Heart left ventricle (tissue), 16 donors: ENCODE measurements at regions of chr2 and their contacts with region 1.

Region 1: DNA sequence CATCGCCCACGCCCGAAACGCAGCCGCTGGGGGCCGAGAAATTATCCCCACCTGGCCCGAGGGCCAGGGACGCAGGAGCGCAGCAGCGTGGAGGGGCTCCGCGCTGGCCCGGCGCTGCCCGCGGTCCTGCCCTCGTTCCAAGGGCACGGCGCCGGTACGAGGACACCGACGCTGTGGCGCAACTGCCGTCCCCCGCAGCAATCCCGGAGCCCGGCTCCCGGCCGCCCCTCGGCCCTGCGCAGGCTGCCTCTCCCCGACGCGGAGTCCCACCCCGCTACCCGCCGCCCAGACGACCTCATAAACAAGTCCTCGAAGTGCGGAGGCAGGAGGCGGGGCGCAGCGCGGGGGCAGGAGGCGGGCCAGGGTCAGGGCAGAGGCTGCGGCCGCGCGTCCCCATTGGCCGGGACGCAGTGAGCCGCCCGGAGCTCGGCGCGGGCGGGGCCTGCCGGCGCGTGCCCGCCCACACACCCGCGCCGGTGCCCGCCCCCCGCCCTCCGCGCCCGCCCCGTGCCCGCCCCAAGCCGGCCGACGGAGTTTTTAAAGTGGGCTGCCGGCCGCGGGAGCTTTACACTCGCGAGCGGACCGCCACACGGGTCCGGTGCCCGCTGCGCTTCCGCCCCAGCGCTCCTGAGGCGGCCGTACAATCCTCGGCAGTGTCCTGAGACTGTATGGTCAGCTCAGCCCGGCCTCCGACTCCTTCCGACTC is at the start of gene EPAS1:
- DNase-seq: peak; percentile 97 to 98 (median 98)
- ATAC-seq: peak; percentile 80 to 92 (median 85)
- H3K4me3 ChIP-seq: peak within 1 kb of the TSS; percentile 76 to 99 (median 92)
- H3K27ac ChIP-seq: peak within 1 kb of the TSS; percentile 92 to 100 (median 96)
- H3K4me1 ChIP-seq: peaks cover 0 to 42% (median 18%) of the 10 kb centered on the region in 12 donors
- H3K27me3 ChIP-seq: peaks cover 0 to 13% (median 0%) of the 10 kb centered on the region in 9 donors
- CTCF ChIP-seq: no peak
- POLR2A ChIP-seq: peak; percentile 61 to 98
- total RNA-seq, gene EPAS1: 194 to 790 (median 216) TPM

Region 2: DNA sequence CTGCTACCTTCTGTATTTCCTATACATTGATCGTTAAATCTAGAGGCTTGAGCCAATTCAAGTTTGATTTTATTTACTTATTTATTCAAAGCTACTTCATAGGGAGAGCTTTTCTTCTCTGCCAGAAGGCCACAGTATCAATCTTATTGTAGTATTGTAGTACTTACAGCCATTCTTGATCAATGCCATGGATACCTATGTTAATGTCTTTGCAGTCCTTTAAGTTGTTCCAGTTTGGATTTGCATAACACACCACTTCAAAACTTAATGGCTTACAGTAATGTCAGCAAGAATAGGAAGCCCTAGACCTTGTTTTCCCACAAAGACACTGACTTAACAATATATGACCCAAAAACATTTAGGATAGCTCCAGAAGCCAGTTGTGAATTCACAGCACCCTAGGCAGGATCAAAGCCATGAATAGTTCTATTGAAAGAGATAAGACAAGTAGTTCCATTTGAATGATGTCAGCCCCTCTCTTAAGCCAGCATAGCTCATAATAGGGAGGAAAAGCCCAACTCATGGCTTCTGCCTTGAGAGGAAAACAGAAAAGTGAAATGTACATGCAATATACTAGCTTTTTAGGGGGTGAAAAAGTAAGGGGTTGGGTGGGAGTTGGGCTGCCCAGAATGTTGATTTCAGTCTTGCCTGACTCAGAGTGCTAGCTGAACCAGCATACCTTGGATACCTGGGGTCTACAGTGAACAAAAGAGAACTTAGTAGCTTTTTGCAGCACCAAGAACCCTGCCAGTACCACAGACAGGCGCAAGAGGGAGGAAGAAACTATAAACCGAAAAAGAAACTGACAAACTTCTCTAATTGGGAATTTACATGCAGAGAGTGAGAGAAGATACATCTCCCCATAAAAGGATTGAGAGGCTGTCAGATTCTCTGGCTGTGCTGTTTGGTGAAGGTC is 1833.8 kb before region 1 on chr2:
- intact Hi-C with region 1: no loop called
- DNase-seq: no peak
- ATAC-seq: peak in 2 of 4 donors; percentile 46 to 60
- H3K4me3 ChIP-seq: no peak overlapping the region
- H3K27ac ChIP-seq: no peak overlapping the region
- H3K4me1 ChIP-seq: peaks cover 0 to 6% (median 0%) of the 10 kb centered on the region in 12 donors
- H3K27me3 ChIP-seq: no peaks in the 10 kb centered on the region
- CTCF ChIP-seq: no peak
- POLR2A ChIP-seq: no peak

Region 3: DNA sequence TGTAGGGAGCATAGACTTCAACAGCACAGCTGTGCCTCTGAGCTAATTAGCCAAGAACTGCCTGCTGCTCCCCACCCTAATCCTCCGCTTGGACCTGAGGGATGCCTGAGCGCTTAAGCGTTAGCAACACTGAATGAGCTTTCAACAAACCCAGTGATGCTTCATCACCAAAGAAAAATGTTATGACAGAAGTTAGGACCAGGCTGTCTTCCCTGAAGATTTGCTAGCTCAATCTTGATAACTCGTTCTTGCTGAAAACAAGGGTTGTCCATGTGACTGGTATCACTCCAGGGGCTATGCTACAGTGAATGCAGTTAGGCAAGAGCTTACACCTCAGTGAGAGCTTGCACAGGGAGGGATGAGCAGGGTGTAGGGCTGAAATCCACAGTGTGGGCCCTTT is 1097.0 kb before region 1 on chr2:
- intact Hi-C with region 1: no loop called
- DNase-seq: no peak
- ATAC-seq: peak in 3 of 4 donors; percentile 73 to 84 (median 78)
- H3K4me3 ChIP-seq: no peak overlapping the region
- H3K27ac ChIP-seq: no peak overlapping the region
- H3K4me1 ChIP-seq: no peaks in the 10 kb centered on the region
- H3K27me3 ChIP-seq: no peaks in the 10 kb centered on the region
- CTCF ChIP-seq: no peak
- POLR2A ChIP-seq: no peak

Region 4: GRCh38 chr2:46067851-46068305 is 229.1 kb before region 1 on chr2:
- intact Hi-C with region 1: loop called (anchors 1 to 10 kb)
- DNase-seq: no peak
- ATAC-seq: peak; percentile 32 to 79 (median 66)
- H3K4me3 ChIP-seq: no peak overlapping the region
- H3K27ac ChIP-seq: peak overlapping the region in 11 of 12 donors; percentile 2 to 69 (median 44)
- H3K4me1 ChIP-seq: peaks cover 0 to 42% (median 16%) of the 10 kb centered on the region in 12 donors
- H3K27me3 ChIP-seq: no peaks in the 10 kb centered on the region
- CTCF ChIP-seq: no peak
- POLR2A ChIP-seq: no peak

Region 5: GRCh38 chr2:46187112-46187618 is 109.8 kb before region 1 on chr2:
- intact Hi-C with region 1: loop called in 1 of 10 experiments (anchors 10 kb)
- DNase-seq: peak in 3 of 5 donors; percentile 46 to 59 (median 55)
- ATAC-seq: peak; percentile 30 to 69 (median 58)
- H3K4me3 ChIP-seq: peak overlapping the region in 9 of 12 donors; percentile 15 to 45 (median 37)
- H3K27ac ChIP-seq: peak overlapping the region; percentile 13 to 94 (median 78)
- H3K4me1 ChIP-seq: peaks cover 0 to 25% (median 12%) of the 10 kb centered on the region in 12 donors
- H3K27me3 ChIP-seq: no peaks in the 10 kb centered on the region
- CTCF ChIP-seq: no peak
- POLR2A ChIP-seq: no peak

Region 6: GRCh38 chr2:46315103-46315890 is 18.3 kb after region 1 on chr2:
- intact Hi-C with region 1: loop called in 1 of 10 experiments (anchors 2 kb)
- DNase-seq: peak; percentile 90 to 96 (median 93)
- ATAC-seq: peak; percentile 90 to 96 (median 94)
- H3K4me3 ChIP-seq: peak overlapping the region in 3 of 12 donors; percentile 3 to 6 (median 4)
- H3K27ac ChIP-seq: peak overlapping the region; percentile 70 to 96 (median 82)
- H3K4me1 ChIP-seq: peaks cover 20 to 100% (median 95%) of the 10 kb centered on the region in 12 donors
- H3K27me3 ChIP-seq: no peaks in the 10 kb centered on the region
- CTCF ChIP-seq: no peak
- POLR2A ChIP-seq: peak in 1 of 2 donors; percentile 28

Region 7: DNA sequence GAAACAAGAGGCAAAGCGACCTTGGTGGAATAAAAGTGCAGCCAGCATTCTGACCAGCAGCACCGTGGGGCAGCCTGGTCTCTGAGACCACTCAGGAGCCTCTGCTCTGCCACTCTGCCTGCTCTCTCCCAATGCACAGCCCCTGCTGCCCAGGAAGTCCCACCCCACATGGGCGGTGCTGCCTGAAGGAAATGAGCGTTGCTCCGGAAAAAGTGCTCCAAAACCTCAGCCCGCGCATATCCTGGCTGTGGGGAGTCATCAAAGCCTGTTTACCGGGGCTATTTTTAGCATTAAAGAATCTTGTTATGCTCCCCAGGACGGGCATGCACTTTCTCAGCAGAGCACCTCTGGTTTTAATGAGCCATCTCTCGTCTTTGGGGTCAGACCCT is 54.8 kb after region 1 on chr2:
- intact Hi-C with region 1: loop called in 9 of 10 experiments (anchors 2 to 5 kb)
- DNase-seq: peak; percentile 66 to 81 (median 76)
- ATAC-seq: peak; percentile 36 to 77 (median 57)
- H3K4me3 ChIP-seq: peak overlapping the region in 8 of 12 donors; percentile 2 to 30 (median 22)
- H3K27ac ChIP-seq: peak overlapping the region; percentile 63 to 84 (median 76)
- H3K4me1 ChIP-seq: peaks cover 18 to 96% (median 78%) of the 10 kb centered on the region in 12 donors
- H3K27me3 ChIP-seq: no peaks in the 10 kb centered on the region
- CTCF ChIP-seq: no peak
- POLR2A ChIP-seq: peak in 1 of 2 donors; percentile 38